ENCODE measurements at regions of chr6 and their contacts with region 1.

Region 1: GRCh38 chr6:40456390-40457013 is 130.7 kb downstream of the LRFN2 start:
- DNase-seq: no peak
- ATAC-seq: peak; percentile 28 to 68 (median 65)
- H3K4me3 ChIP-seq: no peak overlapping the region
- H3K4me3 Mint-ChIP-seq: peak overlapping the region; percentile 51
- H3K27ac ChIP-seq: peak overlapping the region; percentile 81
- H3K27ac Mint-ChIP-seq: peak overlapping the region; percentile 45 to 97
- H3K4me1 ChIP-seq: peaks cover 8% of the 10 kb centered on the region
- H3K4me1 Mint-ChIP-seq: peaks cover 36 to 41% of the 10 kb centered on the region in 2 donors
- H3K27me3 ChIP-seq: no peaks in the 10 kb centered on the region
- H3K27me3 Mint-ChIP-seq: no peaks in the 10 kb centered on the region
- CTCF ChIP-seq: no peak

Region 2: DNA sequence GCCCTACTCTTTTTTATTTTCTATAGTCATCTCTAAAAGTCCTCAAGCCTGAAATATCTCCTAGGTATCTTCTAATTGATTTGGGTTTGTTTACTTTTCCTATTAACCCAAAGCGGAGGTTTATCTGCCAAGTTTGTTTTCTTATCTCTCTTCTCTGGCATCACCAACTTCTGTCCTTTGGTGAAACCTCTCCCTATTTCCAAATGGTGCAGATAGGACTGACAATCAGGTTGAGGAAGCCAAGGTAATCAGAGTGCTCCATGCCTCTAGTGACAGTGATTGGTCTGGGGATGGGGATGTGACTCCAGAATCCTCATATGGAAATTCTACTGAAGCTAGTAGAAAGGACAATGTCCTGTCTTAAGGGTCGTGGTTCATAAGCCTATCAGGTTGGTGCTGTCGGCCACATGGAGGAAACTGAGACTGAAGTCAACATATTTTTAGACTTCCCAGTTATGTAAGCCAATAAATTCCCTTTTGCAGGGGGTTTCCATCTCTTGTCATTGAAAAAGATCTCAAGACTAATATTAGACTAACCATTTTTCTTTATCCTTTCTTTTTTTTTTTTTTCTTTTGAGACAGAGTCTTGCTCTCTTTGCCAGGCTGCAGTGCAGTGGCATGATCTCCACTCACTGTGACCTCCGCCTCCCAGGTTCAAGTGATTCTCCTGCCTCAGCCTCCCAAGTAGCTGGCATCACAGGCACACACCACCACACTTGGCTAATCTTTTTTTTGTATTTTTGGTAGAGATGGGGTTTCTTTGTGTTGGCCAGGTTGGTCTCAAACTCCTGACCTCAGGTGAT is 759.3 kb before region 1 on chr6:
- intact Hi-C with region 1: no loop called
- DNase-seq: no peak
- ATAC-seq: no peak
- H3K4me3 ChIP-seq: no peak overlapping the region
- H3K4me3 Mint-ChIP-seq: no peak overlapping the region
- H3K27ac ChIP-seq: no peak overlapping the region
- H3K27ac Mint-ChIP-seq: no peak overlapping the region
- H3K4me1 ChIP-seq: no peaks in the 10 kb centered on the region
- H3K4me1 Mint-ChIP-seq: no peaks in the 10 kb centered on the region
- H3K27me3 ChIP-seq: peaks cover 2% of the 10 kb centered on the region
- H3K27me3 Mint-ChIP-seq: peaks cover 12 to 32% of the 10 kb centered on the region in 2 donors
- CTCF ChIP-seq: no peak

Region 3: GRCh38 chr6:40022867-40023266 is 433.6 kb before region 1 on chr6:
- intact Hi-C with region 1: no loop called
- DNase-seq: no peak
- ATAC-seq: no peak
- H3K4me3 ChIP-seq: no peak overlapping the region
- H3K4me3 Mint-ChIP-seq: no peak overlapping the region
- H3K27ac ChIP-seq: no peak overlapping the region
- H3K27ac Mint-ChIP-seq: no peak overlapping the region
- H3K4me1 ChIP-seq: no peaks in the 10 kb centered on the region
- H3K4me1 Mint-ChIP-seq: no peaks in the 10 kb centered on the region
- H3K27me3 ChIP-seq: no peaks in the 10 kb centered on the region
- H3K27me3 Mint-ChIP-seq: peaks cover 14 to 38% of the 10 kb centered on the region in 2 donors
- CTCF ChIP-seq: no peak

Region 4: DNA sequence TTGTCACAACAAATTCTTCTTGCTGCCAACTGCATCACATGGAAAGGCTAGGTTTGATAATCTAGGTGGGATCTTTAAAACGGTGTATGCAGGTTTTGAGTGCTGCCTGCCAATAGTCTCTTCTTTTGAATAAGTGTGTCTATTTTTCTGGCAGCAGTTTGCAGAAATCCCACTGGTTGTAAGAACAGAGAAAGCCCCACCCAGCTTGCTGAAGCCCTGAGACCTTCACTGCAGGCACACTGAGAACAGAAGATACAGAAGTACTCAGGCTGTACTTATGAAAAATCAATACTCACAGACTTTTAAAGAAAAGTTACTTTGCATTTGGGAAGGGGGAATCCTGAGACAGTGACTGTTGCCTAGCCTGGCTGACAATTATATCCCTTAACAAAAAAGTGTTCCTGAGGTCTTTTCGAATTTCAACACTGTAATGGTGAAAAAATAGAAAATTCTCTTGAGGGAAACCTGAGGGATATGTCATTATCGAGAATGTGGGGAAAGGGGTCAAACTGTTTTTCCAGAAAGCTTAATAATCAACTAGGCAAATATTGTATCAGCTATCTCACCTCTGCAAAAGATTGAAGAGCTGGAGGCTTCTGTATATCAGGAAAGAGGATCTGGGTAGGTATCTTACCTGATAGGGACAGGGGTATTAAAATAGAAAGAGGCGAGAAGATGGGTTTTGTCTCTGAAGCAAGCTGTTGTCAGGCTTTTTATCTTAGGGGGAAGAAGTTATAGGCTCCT is 69.2 kb before region 1 on chr6:
- intact Hi-C with region 1: loop called (anchors 5 kb)
- DNase-seq: peak in 1 of 2 donors; percentile 20
- ATAC-seq: no peak
- H3K4me3 ChIP-seq: no peak overlapping the region
- H3K4me3 Mint-ChIP-seq: peak overlapping the region; percentile 1
- H3K27ac ChIP-seq: no peak overlapping the region
- H3K27ac Mint-ChIP-seq: peak overlapping the region in 1 of 2 donors; percentile 43
- H3K4me1 ChIP-seq: peaks cover 14% of the 10 kb centered on the region
- H3K4me1 Mint-ChIP-seq: peaks cover 43 to 48% of the 10 kb centered on the region in 2 donors
- H3K27me3 ChIP-seq: no peaks in the 10 kb centered on the region
- H3K27me3 Mint-ChIP-seq: peaks cover 0 to 14% of the 10 kb centered on the region in 2 donors
- CTCF ChIP-seq: no peak

Region 5: GRCh38 chr6:40409716-40410397 is 46.6 kb before region 1 on chr6:
- intact Hi-C with region 1: loop called (anchors 5 kb)
- DNase-seq: no peak
- ATAC-seq: peak in 1 of 3 donors; percentile 17
- H3K4me3 ChIP-seq: no peak overlapping the region
- H3K4me3 Mint-ChIP-seq: peak overlapping the region; percentile 61
- H3K27ac ChIP-seq: peak overlapping the region; percentile 61
- H3K27ac Mint-ChIP-seq: peak overlapping the region; percentile 90 to 95
- H3K4me1 ChIP-seq: peaks cover 33% of the 10 kb centered on the region
- H3K4me1 Mint-ChIP-seq: peaks cover 64 to 82% of the 10 kb centered on the region in 2 donors
- H3K27me3 ChIP-seq: no peaks in the 10 kb centered on the region
- H3K27me3 Mint-ChIP-seq: no peaks in the 10 kb centered on the region
- CTCF ChIP-seq: no peak

Region 6: DNA sequence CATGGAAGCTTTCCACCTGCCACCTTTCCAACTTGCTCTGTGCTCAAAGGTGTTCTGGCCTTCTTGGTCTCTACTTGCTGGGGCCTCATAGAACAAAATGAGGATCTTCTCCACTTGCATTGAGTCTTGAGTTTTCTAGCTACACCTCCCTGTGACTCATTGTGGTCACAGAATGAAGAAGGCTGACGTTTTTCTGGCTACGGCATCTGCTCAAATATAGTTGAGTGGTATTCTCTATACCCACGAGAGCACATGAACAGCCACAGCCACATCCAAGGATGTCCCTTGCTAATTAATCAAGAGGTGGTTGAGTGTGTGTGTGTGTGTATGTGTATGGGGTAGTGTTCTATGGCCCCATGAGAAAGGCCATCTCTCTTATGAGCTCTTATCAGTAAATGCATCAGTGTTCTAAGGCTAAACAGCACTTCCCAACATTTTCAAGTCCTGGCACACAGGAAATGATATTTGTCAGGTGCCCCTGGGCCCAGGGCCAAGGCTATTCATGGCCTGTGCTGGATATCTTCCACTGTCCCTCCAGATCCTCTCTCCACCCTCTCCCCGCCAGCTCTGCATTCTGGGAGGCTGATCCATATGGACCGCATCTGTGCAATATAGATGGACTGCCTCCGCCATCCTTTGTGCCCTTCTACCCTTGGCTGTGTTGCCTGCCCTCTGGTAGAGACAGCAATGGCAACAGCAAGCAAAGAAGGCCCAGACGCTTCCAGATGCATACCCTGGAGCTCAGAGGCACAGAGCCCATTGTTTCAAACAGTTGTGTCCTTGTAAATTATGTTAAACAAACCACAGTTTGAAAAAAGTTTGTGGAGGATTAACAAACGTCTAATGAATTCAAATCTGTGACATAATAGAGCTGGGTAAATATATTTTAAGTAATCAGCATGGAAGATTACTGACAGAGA is 19.6 kb before region 1 on chr6:
- intact Hi-C with region 1: loop called (anchors 2 kb)
- DNase-seq: peak; percentile 25 to 51
- ATAC-seq: peak; percentile 83 to 94 (median 87)
- H3K4me3 ChIP-seq: no peak overlapping the region
- H3K4me3 Mint-ChIP-seq: peak overlapping the region; percentile 0
- H3K27ac ChIP-seq: peak overlapping the region; percentile 71
- H3K27ac Mint-ChIP-seq: peak overlapping the region; percentile 82 to 90
- H3K4me1 ChIP-seq: peaks cover 27% of the 10 kb centered on the region
- H3K4me1 Mint-ChIP-seq: peaks cover 42 to 59% of the 10 kb centered on the region in 2 donors
- H3K27me3 ChIP-seq: no peaks in the 10 kb centered on the region
- H3K27me3 Mint-ChIP-seq: no peaks in the 10 kb centered on the region
- CTCF ChIP-seq: no peak